Posterior cingulate gyrus (tissue), 11 donors: ENCODE measurements at regions of chr17 and their contacts with region 1.

Region 1: DNA sequence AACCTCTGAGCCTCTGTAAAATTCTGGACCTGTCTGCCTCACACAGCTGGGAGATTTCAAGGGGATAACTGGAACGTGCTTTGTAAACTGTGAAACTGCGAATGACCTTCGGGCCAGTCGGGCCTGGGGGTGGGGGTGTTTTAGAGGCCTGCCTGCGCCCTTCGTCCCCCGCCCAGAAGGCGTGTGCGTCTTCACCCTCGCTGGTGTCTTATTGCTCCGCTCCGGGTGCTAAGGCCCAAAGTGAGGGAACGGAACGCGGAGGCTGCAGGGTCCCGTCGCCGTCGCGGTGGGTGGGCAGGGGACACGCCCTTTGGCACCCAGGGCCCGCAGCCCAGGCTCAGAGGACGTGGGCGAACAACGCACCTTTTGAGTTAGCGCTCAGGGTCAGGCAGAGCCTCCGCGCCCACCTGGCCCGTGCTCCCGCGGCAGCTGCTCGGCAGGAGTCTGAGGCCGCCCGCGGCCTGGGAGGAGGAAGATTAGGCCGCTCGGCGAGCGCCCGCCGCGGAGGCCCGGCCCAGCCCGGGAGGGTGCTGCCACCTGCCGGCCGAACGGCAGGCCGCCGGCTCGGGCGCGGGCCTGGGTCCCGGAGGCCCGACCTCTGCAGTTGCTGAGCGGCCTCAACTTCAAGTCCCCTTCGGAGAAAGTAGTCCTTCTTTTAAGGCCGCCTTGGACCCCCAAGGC is 29.7 kb downstream of the DCAKD start:
- DNase-seq: peak; percentile 25 to 95 (median 64)

Region 2: GRCh38 chr17:44775136-44775837 is 246.5 kb before region 1 on chr17:
- intact Hi-C with region 1: loop called (anchors 10 kb)
- DNase-seq: peak in 9 of 10 donors; percentile 90 to 99 (median 97)

Region 3: DNA sequence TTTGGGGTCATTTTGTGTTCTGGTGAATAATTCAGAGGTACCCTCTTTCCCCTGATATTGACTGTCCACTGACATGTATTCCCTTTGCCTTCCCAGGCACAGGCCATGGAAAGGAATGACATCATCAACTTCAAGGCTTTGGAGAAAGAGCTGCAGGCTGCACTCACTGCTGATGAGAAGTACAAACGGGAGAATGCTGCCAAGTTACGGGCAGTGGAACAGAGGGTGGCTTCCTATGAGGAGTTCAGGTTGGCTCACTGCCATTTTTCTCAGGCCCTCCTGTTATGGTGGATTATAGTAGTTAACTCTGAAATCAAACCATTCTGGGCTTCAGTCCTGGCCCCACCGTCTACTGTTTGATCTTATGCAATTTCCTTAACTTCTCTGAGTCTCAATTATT is 120.9 kb before region 1 on chr17:
- intact Hi-C with region 1: loop called (anchors 5 kb)
- DNase-seq: peak in 1 of 10 donors; percentile 83

Region 4: DNA sequence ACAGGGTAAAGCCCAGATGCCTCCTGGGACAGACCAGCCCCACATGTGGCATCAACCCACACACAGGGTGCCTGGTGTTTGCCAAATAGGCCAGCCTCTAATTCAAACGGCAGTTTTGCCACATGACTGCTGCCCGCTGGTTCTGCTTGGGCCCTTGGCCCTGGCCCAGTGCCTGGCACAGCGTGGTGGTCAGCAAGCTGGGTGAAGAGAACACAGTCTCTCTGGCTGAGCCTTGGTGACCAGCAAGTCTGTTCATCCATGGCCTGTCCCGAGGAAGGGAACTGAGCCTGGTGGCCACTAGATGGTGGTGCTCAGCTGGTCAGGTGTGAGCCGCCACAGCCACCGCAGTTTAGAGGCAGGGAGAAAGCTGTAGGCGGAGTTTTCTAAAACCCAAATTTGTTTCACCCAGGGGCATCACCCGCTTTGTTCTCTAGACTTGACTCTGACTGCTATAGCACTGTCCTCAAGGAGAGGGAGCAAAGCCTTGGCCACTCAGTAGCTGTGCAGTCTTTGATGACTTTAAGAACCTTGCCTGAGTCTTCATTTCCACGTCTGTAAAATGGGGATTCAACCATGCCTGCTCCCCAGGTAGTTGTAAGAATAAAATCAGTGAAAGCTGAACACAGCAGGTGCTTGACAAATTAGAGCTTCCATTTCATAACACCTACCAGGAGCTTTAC is 101.7 kb before region 1 on chr17:
- intact Hi-C with region 1: loop called (anchors 1 kb)
- DNase-seq: peak; percentile 71 to 98 (median 86)

Region 5: GRCh38 chr17:44968226-44969143 is 53.3 kb before region 1 on chr17 and contains the start of gene C1QL1:
- intact Hi-C with region 1: no loop called
- DNase-seq: peak; percentile 66 to 97 (median 77)

Region 6: DNA sequence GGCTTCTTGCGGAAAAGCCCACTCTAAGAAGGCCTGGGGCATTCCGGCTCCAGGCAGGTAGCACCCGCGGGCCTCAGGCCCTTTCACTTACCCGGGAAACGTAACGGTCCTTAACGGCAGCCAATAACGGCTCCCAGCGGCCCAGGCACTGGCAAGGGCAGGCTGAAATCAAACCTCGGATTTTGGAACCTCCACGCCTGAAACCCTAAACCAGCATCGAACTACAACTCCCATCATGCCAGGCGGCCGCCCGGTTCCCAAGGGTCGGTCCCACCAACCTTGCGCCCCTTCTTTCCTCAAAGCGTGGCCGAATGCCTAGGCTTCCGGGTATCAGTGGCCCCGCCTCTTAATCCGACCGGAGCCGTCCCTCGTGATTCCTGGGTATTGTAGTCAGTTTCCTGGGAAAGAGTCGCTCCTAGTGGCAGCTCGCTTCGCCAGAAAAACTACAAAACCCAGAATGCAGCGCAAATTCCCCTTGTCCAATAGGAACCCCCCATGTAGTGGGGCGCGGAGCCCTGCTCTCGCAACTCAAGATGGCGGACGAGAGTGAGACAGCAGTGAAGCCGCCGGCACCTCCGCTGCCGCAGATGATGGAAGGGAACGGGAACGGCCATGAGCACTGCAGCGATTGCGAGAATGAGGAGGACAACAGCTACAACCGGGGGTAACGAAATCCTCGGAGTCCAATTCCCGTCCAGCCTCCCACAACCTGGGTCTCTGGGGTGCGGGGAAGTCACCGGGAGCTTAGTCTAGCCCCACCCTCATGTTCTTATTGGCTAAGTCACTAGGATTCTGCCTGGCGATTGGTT is 39.3 kb after region 1 on chr17 and contains the start of gene NMT1:
- intact Hi-C with region 1: no loop called
- DNase-seq: peak; percentile 95 to 100 (median 98)

Region 7: GRCh38 chr17:45098869-45099616 is 77.3 kb after region 1 on chr17:
- intact Hi-C with region 1: loop called (anchors 5 kb)
- DNase-seq: peak; percentile 67 to 97 (median 84)